CD4-positive, alpha-beta T cell (primary cell): ENCODE measurements at regions of chrX and their contacts with region 1.

Region 1: GRCh38 chrX:18425199-18426003 is at the start of gene CDKL5:
- DNase-seq: peak; percentile 91 to 98 (median 94)
- ATAC-seq: peak; percentile 89
- H3K4me3 ChIP-seq: peak within 1 kb of the TSS; percentile 86
- H3K4me3 Mint-ChIP-seq: peak within 1 kb of the TSS; percentile 99
- H3K27ac ChIP-seq: peak within 1 kb of the TSS; percentile 74 to 81
- H3K27ac Mint-ChIP-seq: peak within 1 kb of the TSS; percentile 89
- H3K4me1 ChIP-seq: no peaks in the 10 kb centered on the region
- H3K4me1 Mint-ChIP-seq: peaks cover 18% of the 10 kb centered on the region
- H3K27me3 ChIP-seq: no peaks in the 10 kb centered on the region
- H3K27me3 Mint-ChIP-seq: no peaks in the 10 kb centered on the region
- CTCF ChIP-seq: no peak
- total RNA-seq, gene CDKL5: 2.2 to 2.4 TPM

Region 2: GRCh38 chrX:18886344-18887161 is 461.2 kb after region 1 on chrX:
- CTCF ChIA-PET with region 1: no interaction called
- POLR2A ChIA-PET with region 1: interaction called, 23 read pairs
- intact Hi-C with region 1: no loop called
- DNase-seq: peak in 12 of 14 experiments; percentile 13 to 68 (median 29)
- ATAC-seq: peak; percentile 60
- H3K4me3 ChIP-seq: peak overlapping the region; percentile 61
- H3K4me3 Mint-ChIP-seq: peak overlapping the region; percentile 87
- H3K27ac ChIP-seq: peak overlapping the region; percentile 29 to 63
- H3K27ac Mint-ChIP-seq: peak overlapping the region; percentile 79
- H3K4me1 ChIP-seq: peaks cover 35% of the 10 kb centered on the region
- H3K4me1 Mint-ChIP-seq: peaks cover 40% of the 10 kb centered on the region
- H3K27me3 ChIP-seq: no peaks in the 10 kb centered on the region
- H3K27me3 Mint-ChIP-seq: no peaks in the 10 kb centered on the region
- CTCF ChIP-seq: peak; percentile 32

Region 3: GRCh38 chrX:18984381-18985185 is 559.2 kb after region 1 on chrX:
- CTCF ChIA-PET with region 1: no interaction called
- POLR2A ChIA-PET with region 1: interaction called, 7 read pairs
- intact Hi-C with region 1: loop called in 1 of 2 experiments (anchors 5 kb)
- DNase-seq: peak; percentile 78 to 92 (median 84)
- ATAC-seq: peak; percentile 85
- H3K4me3 ChIP-seq: peak overlapping the region; percentile 78
- H3K4me3 Mint-ChIP-seq: peak overlapping the region; percentile 92
- H3K27ac ChIP-seq: peak overlapping the region; percentile 83 to 94
- H3K27ac Mint-ChIP-seq: peak overlapping the region; percentile 91
- H3K4me1 ChIP-seq: peaks cover 19% of the 10 kb centered on the region
- H3K4me1 Mint-ChIP-seq: peaks cover 21% of the 10 kb centered on the region
- H3K27me3 ChIP-seq: no peaks in the 10 kb centered on the region
- H3K27me3 Mint-ChIP-seq: no peaks in the 10 kb centered on the region
- CTCF ChIP-seq: peak; percentile 26

Region 4: DNA sequence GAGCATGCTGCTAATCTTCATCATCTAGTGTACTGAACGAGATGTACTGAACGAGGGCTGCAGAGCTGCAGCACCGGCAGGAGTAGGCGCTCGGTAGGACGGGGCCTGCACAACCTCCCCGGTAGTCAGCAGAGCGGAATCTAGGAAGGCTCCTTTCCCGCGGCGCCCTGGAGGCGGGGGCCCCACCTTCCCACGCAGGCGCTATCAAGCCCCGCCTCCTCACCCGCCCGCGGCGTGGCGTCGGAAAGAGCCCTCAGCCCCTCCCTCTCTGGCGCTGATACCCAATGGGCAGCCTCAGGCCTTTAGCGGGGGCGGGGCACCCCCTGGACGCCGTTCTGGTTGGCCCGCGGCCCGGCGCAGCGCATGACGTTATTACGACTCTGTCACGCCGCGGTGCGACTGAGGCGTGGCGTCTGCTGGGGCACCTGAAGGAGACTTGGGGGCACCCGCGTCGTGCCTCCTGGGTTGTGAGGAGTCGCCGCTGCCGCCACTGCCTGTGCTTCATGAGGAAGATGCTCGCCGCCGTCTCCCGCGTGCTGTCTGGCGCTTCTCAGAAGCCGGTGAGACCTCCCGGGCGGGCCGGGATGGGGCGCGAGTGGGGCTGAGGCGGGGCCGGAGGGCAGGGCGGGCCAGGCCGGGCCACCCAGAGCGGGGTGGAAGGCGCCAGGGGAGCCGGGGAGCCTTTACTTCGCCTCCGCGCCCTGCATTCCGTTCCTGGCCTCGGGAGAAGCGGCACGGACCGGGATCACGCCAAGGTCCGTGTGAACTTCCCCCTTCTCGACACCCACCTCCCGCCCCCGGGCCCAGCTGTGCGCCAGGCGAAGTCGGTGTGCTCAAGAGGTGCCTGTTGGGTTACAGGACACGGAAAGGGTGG is 918.4 kb after region 1 on chrX and contains the start of gene PDHA1:
- CTCF ChIA-PET with region 1: no interaction called
- POLR2A ChIA-PET with region 1: no interaction called
- intact Hi-C with region 1: loop called in 1 of 2 experiments (anchors 10 kb)
- DNase-seq: peak; percentile 82 to 96 (median 90)
- ATAC-seq: peak; percentile 96
- H3K4me3 ChIP-seq: peak within 1 kb of the TSS; percentile 74
- H3K4me3 Mint-ChIP-seq: peak within 1 kb of the TSS; percentile 90
- H3K27ac ChIP-seq: peak within 1 kb of the TSS; percentile 56 to 60
- H3K27ac Mint-ChIP-seq: peak within 1 kb of the TSS; percentile 90
- H3K4me1 ChIP-seq: peaks cover 27% of the 10 kb centered on the region
- H3K4me1 Mint-ChIP-seq: peaks cover 19% of the 10 kb centered on the region
- H3K27me3 ChIP-seq: no peaks in the 10 kb centered on the region
- H3K27me3 Mint-ChIP-seq: no peaks in the 10 kb centered on the region
- CTCF ChIP-seq: no peak
- total RNA-seq, gene PDHA1: 95.8 to 99.0 TPM